Activated CD4-positive, alpha-beta memory T cell treated with anti-CD3 and anti-CD28 coated beads for 36 hours (primary cell): ENCODE measurements at regions of chr6 and their contacts with region 1.

Region 1: DNA sequence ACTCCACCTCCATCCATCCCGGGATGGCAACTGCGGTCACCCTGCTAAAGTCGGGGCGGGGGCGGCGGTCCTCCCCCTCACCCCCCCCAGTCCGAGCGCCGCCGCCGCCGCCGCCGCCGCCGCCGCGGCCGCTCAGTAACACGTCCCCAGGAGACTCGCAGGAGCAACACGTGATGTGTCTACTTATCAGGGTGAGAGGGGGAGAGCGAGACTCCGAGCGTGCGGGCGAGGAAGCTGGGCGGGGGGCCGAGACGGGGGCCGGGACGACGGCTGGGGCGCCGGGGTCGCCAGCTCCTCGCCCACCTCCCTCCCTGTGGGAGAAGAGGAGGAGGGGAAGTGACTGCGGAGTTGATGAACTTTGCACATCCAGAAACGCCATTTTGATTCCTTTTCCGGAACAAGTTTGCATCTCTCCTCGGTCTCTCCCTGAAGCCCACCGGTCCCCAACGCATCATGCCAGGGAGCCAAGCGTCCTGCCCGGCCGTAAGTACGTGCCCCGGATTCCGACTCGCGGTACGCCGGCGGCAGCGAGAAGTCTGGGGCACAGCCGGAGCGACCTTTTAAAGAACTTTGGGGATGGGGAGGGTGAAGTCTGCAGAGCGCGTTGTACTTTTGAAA is at the start of gene RREB1:
- DNase-seq: peak; percentile 72
- H3K4me3 Mint-ChIP-seq: peak within 1 kb of the TSS; percentile 88
- H3K27ac Mint-ChIP-seq: peak within 1 kb of the TSS; percentile 93
- H3K4me1 Mint-ChIP-seq: peaks cover 36% of the 10 kb centered on the region
- H3K27me3 Mint-ChIP-seq: no peaks in the 10 kb centered on the region
- total RNA-seq, gene RREB1: 13.0 to 13.5 TPM

Region 2: DNA sequence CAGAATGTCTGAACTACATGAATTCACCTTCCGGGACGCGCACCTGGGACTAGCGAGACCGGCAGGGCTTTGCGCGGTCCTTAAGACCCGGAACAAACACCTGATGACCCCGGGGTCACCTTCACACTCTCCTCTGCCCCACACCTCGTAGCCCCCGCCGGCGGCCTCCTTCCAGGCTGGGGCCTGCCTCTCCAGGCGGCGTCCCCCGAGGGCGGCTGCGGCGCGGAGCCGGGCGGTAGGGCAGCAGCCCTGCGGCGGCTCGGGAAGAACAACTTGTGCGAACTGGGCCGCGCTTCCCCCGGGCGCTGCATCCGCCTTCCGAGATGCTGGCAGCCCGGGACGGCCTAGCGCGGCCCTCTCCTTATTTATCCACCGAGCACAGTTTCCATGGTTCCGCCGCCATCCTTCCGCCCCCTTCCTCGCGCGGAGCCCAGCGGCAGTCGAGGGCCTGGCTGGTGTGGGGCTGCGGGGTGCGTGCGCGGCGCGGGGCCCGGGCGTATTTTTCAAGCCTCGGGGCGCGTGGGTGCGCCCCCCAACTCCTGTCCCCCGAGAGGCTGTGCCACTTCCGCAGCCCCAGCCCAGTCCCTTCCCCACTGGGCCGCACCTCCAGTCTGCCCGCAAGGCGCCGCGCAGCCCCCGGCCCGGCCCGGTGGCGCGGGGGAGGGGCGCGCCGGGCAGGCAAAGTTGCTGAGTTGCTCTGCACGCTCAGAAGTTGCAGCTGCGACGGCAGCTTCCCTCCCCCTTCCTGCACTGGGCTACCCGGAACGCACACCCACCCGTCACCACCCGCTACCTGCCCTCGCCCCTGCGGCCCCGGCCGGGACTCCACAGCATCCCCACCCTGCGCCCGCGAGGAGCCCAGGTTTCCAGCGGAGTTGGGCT is 56.2 kb before region 1 on chr6:
- CTCF ChIA-PET with region 1: no interaction called
- POLR2A ChIA-PET with region 1: no interaction called
- intact Hi-C with region 1: loop called (anchors 2 kb)
- DNase-seq: peak; percentile 59
- H3K4me3 Mint-ChIP-seq: peak overlapping the region; percentile 46
- H3K27ac Mint-ChIP-seq: no peak overlapping the region
- H3K4me1 Mint-ChIP-seq: peaks cover 13% of the 10 kb centered on the region
- H3K27me3 Mint-ChIP-seq: peaks cover 9% of the 10 kb centered on the region

Region 3: DNA sequence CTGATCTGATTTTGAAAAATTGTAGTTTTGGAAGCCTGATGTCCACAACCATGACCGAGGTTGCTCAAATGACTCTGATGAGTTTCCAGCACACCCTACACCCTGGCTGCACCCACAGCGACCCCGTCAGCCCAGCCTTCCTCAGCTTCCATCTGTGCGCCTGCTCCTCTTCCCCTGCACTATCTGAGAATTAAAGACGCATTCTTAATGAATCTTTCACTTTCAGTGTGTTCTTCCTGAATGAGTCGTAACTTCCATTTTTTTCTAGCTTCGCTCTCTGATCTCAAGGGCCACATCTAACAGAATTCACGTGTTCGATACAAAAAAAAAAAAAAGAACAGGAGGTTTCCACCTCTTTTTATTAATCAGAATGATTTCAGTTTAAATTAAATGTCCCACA is 21.2 kb before region 1 on chr6:
- CTCF ChIA-PET with region 1: interaction called, 8 read pairs
- POLR2A ChIA-PET with region 1: interaction called, 13 read pairs
- intact Hi-C with region 1: loop called (anchors 1 kb)
- DNase-seq: peak; percentile 57
- H3K4me3 Mint-ChIP-seq: peak overlapping the region; percentile 21
- H3K27ac Mint-ChIP-seq: no peak overlapping the region
- H3K4me1 Mint-ChIP-seq: peaks cover 28% of the 10 kb centered on the region
- H3K27me3 Mint-ChIP-seq: peaks cover 5% of the 10 kb centered on the region

Region 4: DNA sequence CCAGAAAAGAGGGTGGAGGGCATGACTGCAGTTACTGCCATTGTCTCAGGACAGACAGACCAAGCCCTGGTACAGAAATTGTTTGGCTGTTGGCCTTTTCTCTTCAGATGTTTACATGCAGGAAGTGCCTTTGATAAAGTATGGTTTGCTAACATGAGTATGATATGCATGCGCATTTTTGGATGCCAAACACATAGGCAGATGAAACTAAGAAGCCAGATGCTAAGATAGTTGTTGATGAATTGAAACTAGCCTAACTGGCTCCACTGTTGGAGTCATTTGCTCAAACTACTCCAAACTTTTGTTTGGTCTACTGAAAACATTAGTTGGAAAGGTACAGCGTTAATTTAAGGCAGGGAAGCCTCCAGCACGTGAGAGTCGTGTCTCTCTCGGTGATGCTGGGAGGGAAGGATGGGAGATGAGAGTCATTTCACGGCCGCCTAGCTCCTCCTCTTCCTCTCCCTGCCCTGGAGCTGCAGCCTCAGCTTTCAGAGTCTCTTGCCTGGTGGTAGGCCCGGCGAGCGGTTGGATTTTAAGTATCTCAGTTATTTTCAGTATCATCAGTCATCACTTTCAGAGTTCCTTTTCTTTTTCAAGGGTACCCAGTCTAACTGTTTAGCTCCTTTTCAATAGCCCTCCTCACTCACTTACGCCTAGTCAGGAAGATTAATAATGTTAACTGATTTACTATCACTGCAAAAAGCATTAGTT is 29.8 kb after region 1 on chr6:
- CTCF ChIA-PET with region 1: no interaction called
- POLR2A ChIA-PET with region 1: interaction called, 36 read pairs
- intact Hi-C with region 1: loop called (anchors 1 kb)
- DNase-seq: peak; percentile 83
- H3K4me3 Mint-ChIP-seq: peak overlapping the region; percentile 68
- H3K27ac Mint-ChIP-seq: peak overlapping the region; percentile 86
- H3K4me1 Mint-ChIP-seq: peaks cover 71% of the 10 kb centered on the region
- H3K27me3 Mint-ChIP-seq: no peaks in the 10 kb centered on the region

Region 5: DNA sequence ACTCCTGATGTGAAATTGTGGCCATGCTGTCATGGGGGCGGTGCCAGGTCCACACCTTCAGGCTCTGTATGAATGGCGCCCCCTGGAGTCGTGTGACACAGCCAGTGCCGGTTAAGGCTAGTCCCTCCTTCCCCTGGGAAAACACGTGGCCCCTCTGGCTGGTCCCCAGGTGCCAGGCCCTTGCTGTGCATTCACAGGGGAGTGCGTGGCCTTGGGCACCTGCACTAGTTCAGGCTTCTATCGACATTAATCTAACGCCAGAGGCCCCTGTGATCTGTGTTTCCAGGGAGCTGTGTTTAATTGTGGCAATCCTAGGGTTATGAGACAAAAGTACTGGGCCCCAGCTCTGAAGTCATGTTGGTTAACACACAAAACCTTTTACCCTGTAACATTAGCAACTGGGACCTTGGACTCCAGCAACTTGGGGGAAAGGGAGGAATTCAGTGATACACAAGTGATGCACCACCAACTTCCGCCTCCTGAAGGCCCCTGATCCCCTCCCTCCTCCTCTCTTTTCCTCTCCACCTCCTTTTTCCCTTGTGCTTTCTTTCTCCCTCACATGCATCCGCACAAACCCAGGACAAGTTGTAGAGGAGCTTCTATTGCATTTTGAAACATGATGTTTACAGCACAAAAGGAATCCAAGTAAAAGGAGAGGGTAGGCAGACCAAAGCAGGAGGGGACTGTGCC is 131.4 kb after region 1 on chr6:
- CTCF ChIA-PET with region 1: interaction called, 7 read pairs
- POLR2A ChIA-PET with region 1: no interaction called
- intact Hi-C with region 1: loop called (anchors 2 kb)
- DNase-seq: peak; percentile 86
- H3K4me3 Mint-ChIP-seq: no peak overlapping the region
- H3K27ac Mint-ChIP-seq: no peak overlapping the region
- H3K4me1 Mint-ChIP-seq: peaks cover 20% of the 10 kb centered on the region
- H3K27me3 Mint-ChIP-seq: no peaks in the 10 kb centered on the region